ENCODE measurements at regions of chr13 and their contacts with region 1.

Region 1: DNA sequence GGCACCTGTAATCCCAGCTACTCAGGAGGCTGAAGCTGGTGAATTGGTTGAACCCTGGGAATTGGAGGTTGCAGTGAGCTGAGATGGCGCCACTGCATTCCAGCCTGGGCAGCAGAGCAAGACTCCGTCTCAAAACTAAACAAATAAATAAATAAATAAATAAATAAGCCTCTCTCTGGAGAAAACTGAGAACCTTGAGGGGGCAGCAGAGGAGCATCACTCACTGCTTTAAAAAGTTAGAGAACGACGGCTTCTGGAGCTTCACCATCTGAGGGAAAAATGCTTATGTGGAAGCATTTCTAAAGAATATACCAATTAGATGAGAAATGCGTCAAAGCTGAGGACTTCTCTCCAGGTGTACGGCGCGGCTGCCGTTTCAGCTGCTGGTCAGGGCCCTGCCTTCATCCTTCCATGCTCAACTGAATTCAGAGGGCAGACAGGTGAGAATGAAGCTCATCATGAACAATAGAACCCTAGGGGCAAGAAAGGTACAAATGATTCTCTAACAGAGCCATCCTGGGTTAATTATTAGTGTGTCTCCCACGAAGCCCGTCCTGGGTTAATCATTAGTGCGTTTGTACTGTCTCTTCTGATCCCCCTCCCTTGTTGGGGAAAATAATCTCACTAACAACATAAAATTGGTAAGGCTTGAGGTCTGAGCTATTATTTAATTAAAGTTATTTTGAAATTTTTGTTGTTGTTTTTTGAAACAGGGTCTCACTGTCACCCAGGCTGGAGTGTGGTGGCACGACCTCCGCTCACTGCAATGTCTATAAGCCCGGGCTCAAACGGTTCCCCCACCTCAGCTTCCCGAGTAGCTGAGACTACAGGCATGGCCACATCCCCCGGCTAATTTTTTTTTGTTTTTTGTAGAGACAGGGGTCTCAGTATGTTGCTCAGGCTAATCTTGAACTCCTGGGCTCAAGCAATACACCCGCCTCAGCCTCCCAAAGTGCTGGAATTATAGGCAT is 80.1 kb downstream of the IPO5 start:
- DNase-seq: no peak
- H3K4me3 ChIP-seq: no peak overlapping the region
- H3K27ac ChIP-seq: no peak overlapping the region
- H3K4me1 ChIP-seq: peaks cover 0 to 4% (median 0%) of the 10 kb centered on the region in 4 experiments; a peak in 1 of 7 replicates
- H3K27me3 ChIP-seq: no peaks in the 10 kb centered on the region; a peak in 1 of 7 replicates
- CTCF ChIP-seq: peak in 2 of 3 experiments; percentile 26 to 47; a peak in 3 of 4 replicates
- EP300 ChIP-seq: no peak
- POLR2A ChIP-seq: no peak
- RAD21 ChIP-seq: peak; percentile 76 to 81

Region 2: GRCh38 chr13:98044301-98044700 is 10.7 kb after region 1 on chr13:
- CTCF ChIA-PET with region 1: interaction called, 14 read pairs
- POLR2A ChIA-PET with region 1: no interaction called
- DNase-seq: no peak
- H3K4me3 ChIP-seq: no peak overlapping the region
- H3K27ac ChIP-seq: no peak overlapping the region
- H3K4me1 ChIP-seq: peaks cover 0 to 3% (median 1%) of the 10 kb centered on the region in 4 experiments; a peak in 3 of 7 replicates
- H3K27me3 ChIP-seq: no peaks in the 10 kb centered on the region
- CTCF ChIP-seq: no peak
- EP300 ChIP-seq: no peak
- POLR2A ChIP-seq: no peak
- RAD21 ChIP-seq: no peak

Region 3: GRCh38 chr13:98142380-98143156 is 109.0 kb after region 1 on chr13 and contains the start of gene FARP1:
- CTCF ChIA-PET with region 1: interaction called, 10 read pairs
- POLR2A ChIA-PET with region 1: interaction called, 3 read pairs
- DNase-seq: peak in 1 of 2 experiments; percentile 87
- H3K4me3 ChIP-seq: peak within 1 kb of the TSS; percentile 58 to 99 (median 77)
- H3K27ac ChIP-seq: no peak within 1 kb of the TSS; the same call in 1 of the 2 replicates
- H3K4me1 ChIP-seq: peaks cover 9 to 22% (median 16%) of the 10 kb centered on the region in 4 experiments
- H3K27me3 ChIP-seq: peaks cover 0 to 12% (median 8%) of the 10 kb centered on the region in 4 experiments; a peak in 5 of 7 replicates
- CTCF ChIP-seq: peak; percentile 40 to 57 (median 48); a peak in 3 of 4 replicates
- EP300 ChIP-seq: no peak
- POLR2A ChIP-seq: peak in 1 of 2 experiments; percentile 51; a peak in 1 of 3 replicates
- RAD21 ChIP-seq: peak; percentile 41 to 71
- total RNA-seq, gene FARP1: 97.9 and 104 TPM in 2 replicates

Region 4: GRCh38 chr13:98429977-98430736 is 396.6 kb after region 1 on chr13:
- CTCF ChIA-PET with region 1: interaction called, 12 read pairs
- POLR2A ChIA-PET with region 1: interaction called, 3 read pairs
- DNase-seq: no peak
- H3K4me3 ChIP-seq: no peak overlapping the region
- H3K27ac ChIP-seq: no peak overlapping the region
- H3K4me1 ChIP-seq: 0 out of 7 replicates have a peak, but pooled peaks cover 0 to 2% (median 0%) of the 10 kb centered on the region in 4 experiments
- H3K27me3 ChIP-seq: no peaks in the 10 kb centered on the region
- CTCF ChIP-seq: no peak
- EP300 ChIP-seq: no peak
- POLR2A ChIP-seq: no peak
- RAD21 ChIP-seq: no peak

Region 5: DNA sequence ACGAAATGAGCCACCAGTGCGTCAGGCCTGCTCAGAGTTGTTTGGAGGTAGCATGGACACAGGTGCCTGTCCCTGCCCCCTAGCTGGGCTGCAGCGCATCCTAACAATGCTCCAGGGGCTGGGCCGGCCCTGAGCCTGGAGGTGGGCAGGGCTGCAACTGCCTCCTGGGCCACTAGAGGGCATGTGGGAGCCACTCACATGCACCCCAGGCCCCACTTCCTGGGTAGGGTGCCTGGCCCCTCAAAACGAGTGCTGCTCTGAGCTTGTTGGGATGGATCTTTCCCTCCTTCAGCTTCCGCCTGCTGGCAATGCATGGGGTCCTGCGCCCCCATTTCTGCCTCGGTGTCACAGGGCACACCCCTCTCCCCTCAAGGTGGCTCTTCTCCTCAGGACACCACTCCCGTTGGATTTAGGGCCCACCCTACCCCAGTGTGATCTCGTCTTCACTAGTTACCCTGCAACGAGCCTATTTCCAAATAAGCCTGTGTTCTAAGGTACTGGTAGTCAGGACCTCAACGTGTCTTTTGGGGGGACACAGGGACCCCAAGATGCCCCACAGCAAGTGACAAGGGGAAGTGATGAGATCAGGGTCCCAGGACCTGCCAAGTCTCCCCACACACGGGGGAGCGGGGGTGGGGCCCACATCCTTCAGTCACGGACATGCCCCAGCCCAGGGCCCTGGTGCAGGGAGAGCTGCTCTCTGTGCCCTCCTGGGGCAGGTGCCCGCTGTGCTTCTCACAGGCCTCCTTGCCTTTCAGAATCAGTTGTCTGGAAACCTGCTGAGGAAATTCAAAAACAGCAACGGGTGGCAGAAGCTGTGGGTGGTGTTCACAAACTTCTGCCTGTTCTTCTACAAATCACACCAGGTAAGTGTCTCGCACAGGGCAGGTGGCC is 412.0 kb after region 1 on chr13:
- CTCF ChIA-PET with region 1: interaction called, 17 read pairs
- POLR2A ChIA-PET with region 1: no interaction called
- DNase-seq: peak; percentile 64 to 96
- H3K4me3 ChIP-seq: no peak overlapping the region
- H3K27ac ChIP-seq: no peak overlapping the region
- H3K4me1 ChIP-seq: peaks cover under 1 to 16% (median 6%) of the 10 kb centered on the region in 4 experiments; a peak in 6 of 7 replicates
- H3K27me3 ChIP-seq: no peaks in the 10 kb centered on the region
- CTCF ChIP-seq: peak in 2 of 3 experiments; percentile 97 to 99; a peak in 3 of 4 replicates
- EP300 ChIP-seq: no peak
- POLR2A ChIP-seq: peak in 1 of 2 experiments; percentile 37; a peak in 1 of 3 replicates
- RAD21 ChIP-seq: peak; percentile 90 to 94